ENCODE measurements at regions of chr13 and their contacts with region 1.

Region 1: DNA sequence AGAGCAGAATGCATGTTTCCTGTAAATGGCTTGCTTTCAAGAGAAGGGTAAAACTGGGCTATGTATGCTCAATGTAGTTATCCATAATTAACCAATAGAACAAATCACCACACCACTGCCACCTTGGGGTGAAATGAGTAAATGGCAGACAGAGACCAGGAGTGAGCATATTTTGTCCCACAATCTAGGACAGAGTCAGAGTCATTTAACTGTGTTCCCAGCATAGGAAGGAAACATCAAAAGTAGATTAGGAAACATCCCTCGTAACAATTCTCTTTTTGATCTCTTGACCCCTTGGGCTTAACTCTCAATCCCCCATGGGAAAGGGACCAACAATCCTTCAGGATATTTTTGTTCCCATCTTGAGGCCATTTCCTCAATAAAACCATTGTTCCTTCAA is 224.8 kb downstream of the NHLRC3 start:
- DNase-seq: peak; percentile 65
- ATAC-seq: peak; percentile 85
- H3K4me3 Mint-ChIP-seq: no peak overlapping the region
- H3K27ac Mint-ChIP-seq: no peak overlapping the region
- H3K4me1 Mint-ChIP-seq: peaks cover 7% of the 10 kb centered on the region
- H3K27me3 Mint-ChIP-seq: peaks cover 9% of the 10 kb centered on the region

Region 2: GRCh38 chr13:38444904-38445303 is 818.1 kb before region 1 on chr13:
- CTCF ChIA-PET with region 1: no interaction called
- POLR2A ChIA-PET with region 1: no interaction called
- intact Hi-C with region 1: no loop called
- DNase-seq: no peak
- ATAC-seq: no peak
- H3K4me3 Mint-ChIP-seq: no peak overlapping the region
- H3K27ac Mint-ChIP-seq: no peak overlapping the region
- H3K4me1 Mint-ChIP-seq: no peaks in the 10 kb centered on the region
- H3K27me3 Mint-ChIP-seq: peaks cover 3% of the 10 kb centered on the region

Region 3: GRCh38 chr13:39051157-39051556 is 211.9 kb before region 1 on chr13:
- CTCF ChIA-PET with region 1: interaction called, 3 read pairs
- POLR2A ChIA-PET with region 1: no interaction called
- intact Hi-C with region 1: loop called (anchors 1 kb)
- DNase-seq: no peak
- ATAC-seq: peak; percentile 47
- H3K4me3 Mint-ChIP-seq: no peak overlapping the region
- H3K27ac Mint-ChIP-seq: no peak overlapping the region
- H3K4me1 Mint-ChIP-seq: peaks cover 3% of the 10 kb centered on the region
- H3K27me3 Mint-ChIP-seq: no peaks in the 10 kb centered on the region

Region 4: GRCh38 chr13:39196958-39197646 is 65.9 kb before region 1 on chr13:
- CTCF ChIA-PET with region 1: interaction called, 3 read pairs
- POLR2A ChIA-PET with region 1: no interaction called
- intact Hi-C with region 1: loop called in 1 of 2 experiments (anchors 2 kb)
- DNase-seq: no peak
- ATAC-seq: peak; percentile 89
- H3K4me3 Mint-ChIP-seq: no peak overlapping the region
- H3K27ac Mint-ChIP-seq: peak overlapping the region; percentile 52
- H3K4me1 Mint-ChIP-seq: peaks cover 13% of the 10 kb centered on the region
- H3K27me3 Mint-ChIP-seq: peaks cover 13% of the 10 kb centered on the region

Region 5: GRCh38 chr13:39296193-39296592 is 33.2 kb after region 1 on chr13:
- CTCF ChIA-PET with region 1: no interaction called
- POLR2A ChIA-PET with region 1: no interaction called
- intact Hi-C with region 1: no loop called
- DNase-seq: no peak
- ATAC-seq: no peak
- H3K4me3 Mint-ChIP-seq: no peak overlapping the region
- H3K27ac Mint-ChIP-seq: no peak overlapping the region
- H3K4me1 Mint-ChIP-seq: no peaks in the 10 kb centered on the region
- H3K27me3 Mint-ChIP-seq: peaks cover 2% of the 10 kb centered on the region

Region 6: DNA sequence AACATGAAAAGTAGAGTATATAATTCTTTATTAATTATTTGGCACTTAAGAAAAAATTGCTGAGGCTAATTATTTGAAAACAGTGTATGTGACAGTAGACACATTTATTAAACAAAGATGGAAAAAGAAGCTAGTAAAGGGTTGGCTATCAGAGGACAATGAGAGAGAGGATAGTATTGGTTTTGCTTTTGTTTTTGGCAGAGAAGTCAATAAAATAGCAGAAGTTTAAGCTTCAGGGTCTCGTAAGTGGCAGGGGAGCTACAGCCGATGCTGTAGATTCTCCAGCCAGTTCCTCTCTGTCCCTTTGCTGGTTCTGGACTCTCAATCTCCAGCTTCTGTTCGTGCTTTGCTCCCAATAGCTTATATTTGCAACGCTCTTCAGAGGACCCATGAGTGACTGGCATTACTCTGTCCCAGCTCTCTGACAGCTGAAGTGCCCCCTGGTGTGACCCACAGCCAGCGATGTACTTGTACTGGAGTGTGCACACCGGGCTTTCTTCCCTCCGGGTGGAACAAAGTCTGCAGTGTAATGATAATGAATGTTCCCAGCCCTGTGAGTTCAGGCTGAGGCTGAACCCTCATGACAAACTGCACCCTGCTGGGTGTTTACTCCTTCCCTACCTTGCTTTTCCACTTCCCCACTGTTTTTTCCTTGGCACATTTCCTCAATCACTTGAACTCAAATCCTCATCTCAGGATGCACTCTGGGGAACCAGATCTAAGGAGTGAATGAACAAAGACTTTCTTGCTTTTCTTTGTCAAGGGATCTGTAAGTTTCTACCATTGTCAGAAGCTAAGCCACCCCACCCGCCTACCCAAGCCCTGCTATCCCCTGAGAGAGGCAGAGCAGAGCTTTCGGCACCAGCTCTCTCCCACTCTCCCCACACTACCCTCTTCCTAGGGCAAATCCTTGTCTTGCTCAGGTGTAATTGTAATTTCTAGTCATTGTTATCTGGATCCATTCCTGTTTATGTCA is 85.2 kb after region 1 on chr13:
- CTCF ChIA-PET with region 1: no interaction called
- POLR2A ChIA-PET with region 1: no interaction called
- intact Hi-C with region 1: no loop called
- DNase-seq: no peak
- ATAC-seq: no peak
- H3K4me3 Mint-ChIP-seq: no peak overlapping the region
- H3K27ac Mint-ChIP-seq: no peak overlapping the region
- H3K4me1 Mint-ChIP-seq: no peaks in the 10 kb centered on the region
- H3K27me3 Mint-ChIP-seq: peaks cover 27% of the 10 kb centered on the region

Region 7: GRCh38 chr13:39676315-39676876 is 413.4 kb after region 1 on chr13:
- CTCF ChIA-PET with region 1: no interaction called
- POLR2A ChIA-PET with region 1: no interaction called
- intact Hi-C with region 1: loop called in 1 of 2 experiments (anchors 5 kb)
- DNase-seq: peak; percentile 17
- ATAC-seq: no peak
- H3K4me3 Mint-ChIP-seq: no peak overlapping the region
- H3K27ac Mint-ChIP-seq: no peak overlapping the region
- H3K4me1 Mint-ChIP-seq: peaks cover 3% of the 10 kb centered on the region
- H3K27me3 Mint-ChIP-seq: no peaks in the 10 kb centered on the region

Region 8: GRCh38 chr13:39910041-39910440 is 647.0 kb after region 1 on chr13:
- CTCF ChIA-PET with region 1: no interaction called
- POLR2A ChIA-PET with region 1: no interaction called
- intact Hi-C with region 1: no loop called
- DNase-seq: no peak
- ATAC-seq: no peak
- H3K4me3 Mint-ChIP-seq: no peak overlapping the region
- H3K27ac Mint-ChIP-seq: no peak overlapping the region
- H3K4me1 Mint-ChIP-seq: peaks cover 9% of the 10 kb centered on the region
- H3K27me3 Mint-ChIP-seq: peaks cover 13% of the 10 kb centered on the region

Measured in activated CD4-positive, alpha-beta T cell treated with anti-CD3 and anti-CD28 coated beads for 36 hours (primary cell).